CD14-positive monocyte (primary cell): ENCODE measurements at regions of chr10 and their contacts with region 1.

Region 1: GRCh38 chr10:97792141-97792721 is 20.4 kb upstream of the SFRP5 start:
- DNase-seq: peak; percentile 9 to 47 (median 30)
- H3K4me3 ChIP-seq: no peak overlapping the region
- H3K4me3 Mint-ChIP-seq: no peak overlapping the region
- H3K27ac ChIP-seq: no peak overlapping the region
- H3K27ac Mint-ChIP-seq: no peak overlapping the region
- H3K4me1 ChIP-seq: no peaks in the 10 kb centered on the region
- H3K4me1 Mint-ChIP-seq: peaks cover 5% of the 10 kb centered on the region
- H3K27me3 ChIP-seq: peaks cover 0 to 8% of the 10 kb centered on the region in 2 donors
- H3K27me3 Mint-ChIP-seq: peaks cover 18 to 43% (median 36%) of the 10 kb centered on the region in 3 donors
- CTCF ChIP-seq: peak; percentile 92

Region 2: DNA sequence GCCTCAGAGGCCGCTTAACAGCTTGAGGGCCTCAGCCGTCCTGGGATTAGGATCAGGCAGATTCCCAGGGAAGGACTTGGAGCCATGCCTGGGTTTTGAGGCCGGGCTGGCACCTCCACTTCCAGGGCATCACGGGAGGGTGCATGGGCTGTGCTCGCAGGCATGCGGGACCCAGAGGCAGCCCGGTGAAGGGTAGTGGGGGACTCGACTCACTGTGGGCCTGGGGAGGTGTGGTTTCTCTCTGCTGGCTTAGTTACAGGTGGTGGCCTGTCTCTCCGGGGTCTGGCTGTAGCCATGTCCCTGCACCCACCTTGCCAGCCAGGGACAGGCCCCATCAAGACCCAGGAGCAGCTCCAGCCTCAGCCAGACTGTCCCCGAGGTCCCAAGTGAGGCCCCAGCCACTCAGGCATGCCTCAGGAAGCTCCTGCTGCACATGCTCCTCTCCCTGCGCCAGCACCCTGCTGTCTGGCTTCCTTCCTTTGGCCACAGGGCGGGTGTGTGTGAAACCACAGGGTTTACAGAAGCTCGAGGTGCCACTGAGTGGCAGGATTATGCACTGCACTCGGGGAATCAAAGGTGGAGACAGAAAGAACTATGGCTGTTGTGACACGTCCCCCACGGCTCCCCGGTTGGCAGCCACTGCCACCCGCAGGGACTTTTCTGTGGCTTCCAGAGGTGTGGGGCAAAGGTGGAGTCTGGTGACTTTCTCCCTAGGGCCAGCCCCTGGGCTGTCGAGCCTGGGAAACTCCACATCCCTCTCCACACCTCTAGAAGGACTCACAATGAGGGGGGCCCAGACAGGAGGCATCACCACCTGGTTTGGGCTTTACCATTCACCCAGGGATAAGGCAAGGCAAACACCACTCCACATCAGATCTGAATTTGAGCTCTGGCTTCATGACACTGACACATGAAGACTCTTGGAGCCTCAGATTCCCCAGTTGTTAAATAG is 77.1 kb after region 1 on chr10:
- intact Hi-C with region 1: loop called (anchors 1 to 5 kb)
- DNase-seq: peak; percentile 22 to 49 (median 26)
- H3K4me3 ChIP-seq: no peak overlapping the region
- H3K4me3 Mint-ChIP-seq: no peak overlapping the region
- H3K27ac ChIP-seq: no peak overlapping the region
- H3K27ac Mint-ChIP-seq: peak overlapping the region in 1 of 7 donors; percentile 70
- H3K4me1 ChIP-seq: peaks cover 3 to 6% of the 10 kb centered on the region in 2 donors
- H3K4me1 Mint-ChIP-seq: peaks cover 10% of the 10 kb centered on the region
- H3K27me3 ChIP-seq: peaks cover 2% of the 10 kb centered on the region in 2 donors
- H3K27me3 Mint-ChIP-seq: peaks cover 3 to 21% (median 13%) of the 10 kb centered on the region in 3 donors
- CTCF ChIP-seq: peak; percentile 50